Astrocyte of the cerebellum (primary cell): ENCODE measurements at regions of chr3 and their contacts with region 1.

Region 1: GRCh38 chr3:58191361-58191991 is 19.3 kb downstream of the DNASE1L3 start:
- DNase-seq: no peak
- H3K4me3 ChIP-seq: no peak overlapping the region
- CTCF ChIP-seq: no peak

Region 2: DNA sequence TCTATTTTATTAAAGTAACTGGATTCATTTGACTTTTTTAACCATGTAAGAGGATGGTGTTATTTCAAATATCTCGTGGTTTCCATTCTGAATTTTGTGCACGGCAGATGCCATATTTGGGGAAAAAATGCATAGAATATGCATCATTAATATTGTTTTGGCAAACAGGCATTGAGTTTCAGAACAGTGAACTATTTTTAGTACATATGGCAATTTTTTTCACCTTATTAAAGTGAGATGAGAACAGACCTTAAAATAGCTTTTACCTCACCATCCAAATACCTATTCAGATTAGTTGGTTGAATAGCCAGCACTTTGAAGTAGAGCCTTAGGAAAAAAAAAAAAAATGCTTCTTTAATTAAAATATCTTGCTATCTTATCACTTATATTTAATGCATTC is 300.6 kb before region 1 on chr3:
- in situ Hi-C with region 1: no loop called
- DNase-seq: peak; percentile 60
- H3K4me3 ChIP-seq: no peak overlapping the region
- CTCF ChIP-seq: no peak

Region 3: DNA sequence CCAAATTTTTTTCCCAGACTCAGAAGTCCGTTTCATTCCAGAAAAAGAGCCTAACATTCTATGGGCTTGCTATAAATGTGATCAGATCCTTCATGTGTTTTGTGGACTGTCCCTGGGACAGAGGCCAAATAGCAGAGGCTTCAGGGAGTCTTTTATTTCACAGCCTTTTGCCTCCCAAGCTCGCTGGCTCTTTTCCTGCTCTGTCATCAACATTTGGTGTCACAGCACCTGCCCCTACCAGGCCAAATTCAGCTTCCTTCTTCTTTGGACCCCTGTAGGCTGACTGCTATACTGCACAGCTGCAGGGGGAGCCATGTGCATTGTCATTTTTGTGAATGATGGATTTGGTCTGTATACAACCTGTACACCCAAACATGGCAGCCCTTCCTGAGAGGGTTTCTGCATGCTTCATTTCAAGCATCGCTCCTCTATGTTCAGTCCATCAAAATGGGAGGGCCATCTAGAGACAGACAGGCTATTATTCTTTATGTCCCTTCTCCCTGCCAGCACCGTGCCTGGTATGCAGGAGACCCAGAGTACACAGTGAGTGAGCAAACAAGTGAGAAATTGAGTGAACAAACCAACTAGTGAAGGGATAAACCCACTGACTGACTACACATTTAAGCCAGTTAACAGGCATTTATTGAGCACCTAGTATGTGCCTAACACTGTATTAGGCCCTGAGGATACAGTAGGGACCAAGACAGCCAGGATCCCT is 96.7 kb after region 1 on chr3:
- in situ Hi-C with region 1: loop called (anchors 5 kb)
- DNase-seq: no peak
- H3K4me3 ChIP-seq: no peak overlapping the region
- CTCF ChIP-seq: peak; percentile 16